ENCODE measurements at regions of chr14 and their contacts with region 1.

Region 1: GRCh38 chr14:68874746-68875155 is 81.9 kb upstream of the ZFP36L1 start:
- DNase-seq: no peak
- ATAC-seq: peak in 2 of 4 donors; percentile 36 to 84
- H3K4me3 ChIP-seq: no peak overlapping the region
- H3K27ac ChIP-seq: no peak overlapping the region
- H3K4me1 ChIP-seq: peaks cover 0 to 1% (median 0%) of the 10 kb centered on the region in 4 donors
- H3K27me3 ChIP-seq: no peaks in the 10 kb centered on the region
- CTCF ChIP-seq: no peak
- POLR2A ChIP-seq: no peak

Region 2: DNA sequence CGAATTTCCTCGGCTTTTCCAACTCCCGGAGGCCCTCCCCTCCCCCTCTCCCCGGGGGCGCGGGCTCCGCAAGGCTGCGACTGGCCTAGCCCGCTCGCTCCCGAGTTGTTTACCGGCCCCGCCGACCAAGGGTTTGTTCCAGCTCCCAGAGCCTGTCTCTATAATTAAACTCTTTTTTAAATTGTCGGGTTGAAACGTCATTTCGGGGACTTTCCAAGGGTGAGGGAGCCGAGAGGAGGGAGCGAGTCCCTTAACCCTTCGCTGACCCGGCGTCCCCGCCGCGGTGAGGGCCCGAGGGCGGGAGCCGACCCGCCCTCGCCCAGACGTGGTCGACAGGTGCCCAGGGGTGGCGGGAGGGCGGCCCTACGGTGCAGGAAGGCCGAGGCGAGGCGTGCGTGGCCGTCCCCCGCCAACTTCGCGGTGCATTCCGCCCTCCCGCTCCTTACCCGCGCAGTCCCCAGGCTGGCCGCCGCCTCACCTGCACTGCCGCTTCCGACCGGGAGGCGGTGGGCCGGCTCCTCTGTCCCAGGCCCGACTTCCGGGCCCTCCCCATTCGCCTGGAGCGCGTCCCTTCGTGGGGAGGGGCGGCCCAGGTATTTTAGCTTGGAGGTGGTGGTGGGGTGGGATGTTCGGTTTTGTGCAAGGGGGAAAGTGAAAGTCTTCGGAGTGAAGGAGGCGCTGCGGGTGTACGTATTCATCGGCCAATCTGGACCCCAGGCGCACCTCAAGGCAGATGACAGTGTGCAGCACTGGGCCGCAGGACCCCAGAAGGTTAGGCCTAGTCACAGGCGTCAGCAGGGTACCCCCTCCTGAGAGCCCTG is 78.9 kb before region 1 on chr14:
- intact Hi-C with region 1: no loop called
- DNase-seq: peak; percentile 89 to 90 (median 90)
- ATAC-seq: peak; percentile 45 to 70 (median 56)
- H3K4me3 ChIP-seq: peak overlapping the region; percentile 90 to 95 (median 93)
- H3K27ac ChIP-seq: peak overlapping the region; percentile 100
- H3K4me1 ChIP-seq: peaks cover 0 to 6% (median 3%) of the 10 kb centered on the region in 4 donors
- H3K27me3 ChIP-seq: no peaks in the 10 kb centered on the region
- CTCF ChIP-seq: peak; percentile 69 to 93 (median 74)
- POLR2A ChIP-seq: peak; percentile 98

Region 3: GRCh38 chr14:69107407-69108003 is 232.8 kb after region 1 on chr14:
- intact Hi-C with region 1: loop called in 1 of 2 experiments (anchors 10 kb)
- DNase-seq: no peak
- ATAC-seq: peak; percentile 82 to 90 (median 86)
- H3K4me3 ChIP-seq: no peak overlapping the region
- H3K27ac ChIP-seq: no peak overlapping the region
- H3K4me1 ChIP-seq: no peaks in the 10 kb centered on the region
- H3K27me3 ChIP-seq: no peaks in the 10 kb centered on the region
- CTCF ChIP-seq: peak; percentile 65 to 79 (median 70)
- POLR2A ChIP-seq: no peak

Measured in right lobe of liver (tissue), 6 donors.